Activated CD4-positive, alpha-beta memory T cell treated with anti-CD3 and anti-CD28 coated beads for 36 hours (primary cell): ENCODE measurements at regions of chr22 and their contacts with region 1.

Region 1: DNA sequence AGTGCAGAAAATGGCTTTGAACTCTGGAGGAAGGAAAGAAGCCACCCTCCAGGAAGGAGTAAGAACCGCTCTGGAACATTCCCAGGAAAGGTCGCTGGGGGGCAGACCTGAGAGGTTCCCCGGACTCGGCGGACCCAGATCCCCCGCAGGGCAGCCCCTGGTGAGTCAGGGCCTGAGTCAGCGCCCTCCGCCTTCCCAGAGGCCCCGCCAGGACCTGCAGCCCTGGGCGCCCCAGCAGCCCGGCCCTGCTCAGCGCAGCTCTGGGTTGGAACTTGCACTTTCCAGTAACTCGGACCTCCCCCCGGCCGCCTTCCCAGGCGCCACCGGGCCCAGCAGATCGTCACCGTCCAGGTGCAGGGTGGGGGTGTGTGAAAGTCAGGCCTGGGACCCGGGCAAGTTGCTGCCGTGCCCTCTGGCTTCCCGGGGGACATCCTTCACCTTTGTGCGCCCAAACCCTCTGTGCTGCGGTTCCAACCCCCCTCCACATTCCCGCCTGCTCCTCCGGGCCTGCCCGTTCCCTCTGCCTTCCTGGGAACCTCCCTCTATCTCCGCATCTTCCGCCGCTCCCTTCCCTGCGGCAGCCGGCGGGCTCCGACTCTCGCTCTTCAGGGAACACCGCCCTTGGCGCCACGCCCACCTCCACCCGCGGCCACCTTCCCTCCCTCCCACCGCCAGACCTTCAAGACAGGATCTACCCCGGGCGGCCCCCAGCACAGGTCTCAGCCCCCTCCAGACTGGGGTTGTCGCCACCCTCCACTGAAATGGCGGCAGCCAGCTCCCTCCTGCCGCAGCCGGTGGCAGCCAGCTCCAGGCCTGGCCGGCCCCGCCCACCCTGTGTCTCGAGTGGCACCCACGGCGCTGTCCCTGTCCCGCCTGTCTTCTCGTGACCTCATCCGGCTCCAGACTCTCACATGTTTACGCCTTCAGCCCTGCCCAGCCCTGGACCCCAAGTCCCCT is 36.8 kb upstream of the WNT7B start:
- DNase-seq: peak; percentile 96
- H3K4me3 Mint-ChIP-seq: peak overlapping the region; percentile 85
- H3K27ac Mint-ChIP-seq: peak overlapping the region; percentile 81
- H3K4me1 Mint-ChIP-seq: peaks cover 8% of the 10 kb centered on the region
- H3K27me3 Mint-ChIP-seq: no peaks in the 10 kb centered on the region

Region 2: DNA sequence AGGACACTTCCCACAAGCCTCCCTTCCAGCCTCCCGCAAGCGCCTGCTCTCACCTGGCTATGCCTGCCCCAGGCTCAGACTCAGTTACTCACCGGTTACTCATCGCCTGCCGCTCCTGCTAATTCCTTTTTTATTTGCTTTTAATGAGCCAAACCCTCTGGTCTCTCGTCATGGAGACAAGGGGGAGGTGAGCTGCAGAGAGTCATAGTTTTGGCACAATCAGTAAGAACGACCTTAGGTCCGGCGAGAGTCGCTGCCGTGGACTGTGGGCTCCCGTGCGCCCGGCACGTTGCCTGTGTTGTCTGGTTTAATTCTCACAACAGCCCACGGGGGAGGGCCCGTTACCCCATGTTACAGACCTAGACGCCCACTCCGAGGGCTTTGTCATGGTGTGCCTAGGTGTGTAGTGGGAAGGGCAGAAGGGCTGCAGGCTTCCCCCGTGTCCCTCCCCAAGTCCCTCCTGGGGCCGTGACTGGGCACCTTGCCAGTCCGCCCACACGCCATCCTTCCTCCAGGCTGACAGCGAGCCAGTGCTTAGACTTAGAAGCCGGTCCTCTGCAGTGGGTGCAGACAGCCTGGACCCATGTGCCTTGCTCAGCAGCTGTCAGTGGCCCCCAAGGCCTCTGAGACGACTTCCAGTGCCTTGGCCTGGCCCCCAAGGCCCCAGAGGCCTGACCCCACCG is 78.9 kb before region 1 on chr22:
- CTCF ChIA-PET with region 1: no interaction called
- POLR2A ChIA-PET with region 1: no interaction called
- intact Hi-C with region 1: no loop called
- DNase-seq: no peak
- H3K4me3 Mint-ChIP-seq: no peak overlapping the region
- H3K27ac Mint-ChIP-seq: no peak overlapping the region
- H3K4me1 Mint-ChIP-seq: no peaks in the 10 kb centered on the region
- H3K27me3 Mint-ChIP-seq: peaks cover 29% of the 10 kb centered on the region

Region 3: DNA sequence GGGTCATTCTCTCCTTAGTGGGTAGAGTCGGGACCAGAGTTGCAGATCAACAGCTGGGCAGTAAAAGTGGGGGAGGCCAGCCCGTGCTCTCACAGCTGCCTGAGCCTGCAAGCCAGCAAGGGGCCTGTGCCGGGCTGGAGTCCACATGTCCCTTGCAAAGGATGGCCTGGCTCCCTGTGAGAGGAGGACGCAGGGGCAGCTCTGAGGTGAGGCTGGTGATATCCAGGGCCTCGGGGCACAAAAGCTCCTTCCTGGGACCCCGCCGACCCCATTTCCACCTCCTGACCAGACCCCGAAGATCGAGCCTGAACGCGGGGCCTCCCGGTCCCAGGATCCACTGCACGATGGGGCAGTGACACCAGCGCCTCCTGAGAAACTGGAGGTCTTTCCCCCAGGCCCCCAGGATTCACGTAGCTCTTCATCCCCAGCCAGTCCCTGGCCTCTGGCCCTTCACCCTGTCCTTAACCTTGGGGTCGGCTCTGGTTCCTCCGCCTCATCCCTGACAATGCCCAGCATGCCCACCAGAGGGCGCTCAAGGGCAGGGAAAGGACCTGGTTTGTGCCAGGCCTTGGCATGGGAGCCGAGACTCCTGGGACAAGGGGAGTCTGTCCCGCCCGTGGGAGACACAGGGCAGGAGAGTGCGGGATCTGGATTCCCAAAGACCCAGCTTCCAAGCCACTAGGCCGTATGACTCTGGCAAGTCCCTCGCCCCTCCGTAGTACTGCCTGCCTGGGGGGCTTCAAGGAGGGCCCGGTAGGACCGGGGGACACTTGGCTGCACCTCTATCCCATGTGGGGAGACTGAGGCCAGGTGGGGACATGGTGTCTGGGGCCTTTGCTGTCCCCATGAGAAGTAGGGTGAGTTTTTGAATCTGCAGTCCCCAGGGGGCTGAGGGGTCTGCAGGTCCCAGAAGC is 19.0 kb before region 1 on chr22:
- CTCF ChIA-PET with region 1: interaction called, 22 read pairs
- POLR2A ChIA-PET with region 1: no interaction called
- intact Hi-C with region 1: no loop called
- DNase-seq: peak; percentile 85
- H3K4me3 Mint-ChIP-seq: no peak overlapping the region
- H3K27ac Mint-ChIP-seq: no peak overlapping the region
- H3K4me1 Mint-ChIP-seq: no peaks in the 10 kb centered on the region
- H3K27me3 Mint-ChIP-seq: peaks cover 2% of the 10 kb centered on the region

Region 4: DNA sequence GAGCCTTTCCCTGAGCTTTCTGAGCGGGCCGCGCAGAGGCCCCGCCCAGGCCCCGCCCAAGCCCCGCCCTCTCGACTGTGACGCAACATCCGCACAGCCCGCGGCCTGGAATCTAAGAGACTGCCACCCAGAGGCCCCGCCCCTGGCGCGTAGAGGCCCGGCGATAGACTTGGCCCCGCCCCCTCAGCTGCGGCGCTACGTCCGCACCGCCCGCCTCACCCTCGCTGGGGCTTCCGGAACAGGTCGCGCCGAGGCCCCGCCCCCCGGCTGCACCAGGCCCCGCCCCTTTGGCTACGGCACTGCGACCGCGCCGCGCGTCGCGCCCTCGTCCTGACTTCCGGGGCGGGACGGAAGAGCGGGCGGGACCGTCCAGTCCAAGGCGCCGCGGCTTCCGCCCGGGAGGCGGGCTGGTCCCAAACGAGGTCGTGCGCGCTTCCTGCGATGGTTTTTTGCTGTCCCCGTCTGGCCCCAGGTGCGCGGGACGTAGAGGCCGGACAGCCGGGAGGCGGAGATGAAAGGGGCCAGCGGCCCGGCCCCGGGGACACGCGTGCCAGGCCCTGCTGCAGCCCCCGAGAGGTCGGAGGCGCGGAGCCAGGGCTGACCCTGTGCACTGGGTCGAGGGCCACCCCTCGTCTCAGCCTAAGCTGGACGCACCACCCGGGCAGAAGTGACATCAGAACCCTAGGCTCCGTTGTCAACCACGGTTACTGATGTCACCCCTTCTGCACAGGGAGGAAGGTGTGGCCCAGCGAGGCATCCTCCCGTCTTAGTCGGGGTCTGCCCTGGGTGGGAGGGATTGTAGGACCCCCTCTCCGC is 22.2 kb after region 1 on chr22:
- CTCF ChIA-PET with region 1: interaction called, 76 read pairs
- POLR2A ChIA-PET with region 1: interaction called, 9 read pairs
- intact Hi-C with region 1: loop called (anchors 1 kb)
- DNase-seq: peak; percentile 100
- H3K4me3 Mint-ChIP-seq: peak overlapping the region; percentile 83
- H3K27ac Mint-ChIP-seq: peak overlapping the region; percentile 86
- H3K4me1 Mint-ChIP-seq: peaks cover 12% of the 10 kb centered on the region
- H3K27me3 Mint-ChIP-seq: no peaks in the 10 kb centered on the region

Region 5: DNA sequence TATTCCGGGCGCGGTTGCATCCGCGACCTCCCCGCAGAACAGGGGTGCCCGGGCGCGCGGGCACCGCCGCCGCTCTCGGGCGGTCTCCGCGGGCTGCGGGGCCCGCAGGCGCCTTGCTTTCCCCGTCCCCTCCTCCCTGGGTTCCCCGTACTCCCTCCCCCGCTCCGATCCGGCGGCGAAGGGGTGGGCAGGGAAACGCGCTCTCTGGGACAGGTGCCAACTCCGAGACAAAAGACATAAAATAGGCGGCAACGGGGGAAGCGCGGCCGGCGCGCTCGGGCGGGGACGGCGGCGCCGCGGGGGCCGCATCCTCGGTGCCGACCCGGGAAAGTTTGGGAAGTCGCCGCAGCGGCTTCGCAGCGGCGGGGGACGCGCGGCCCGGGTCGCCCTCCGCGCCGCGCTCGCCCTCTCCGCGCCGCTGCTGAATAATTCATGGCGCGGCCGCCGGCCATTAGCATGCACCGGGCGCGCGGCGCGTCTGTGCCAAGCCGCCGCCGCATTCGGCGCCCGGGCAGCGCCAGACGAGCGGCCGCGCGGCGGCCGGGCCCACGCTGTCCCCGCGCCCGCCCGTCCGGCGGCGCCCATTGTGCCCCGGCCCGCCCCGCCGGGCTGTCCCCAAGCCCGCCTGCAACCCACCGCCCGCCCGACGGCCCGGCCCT is 57.8 kb after region 1 on chr22:
- CTCF ChIA-PET with region 1: interaction called, 10 read pairs
- POLR2A ChIA-PET with region 1: interaction called, 7 read pairs
- intact Hi-C with region 1: loop called (anchors 1 kb)
- DNase-seq: peak; percentile 71
- H3K4me3 Mint-ChIP-seq: peak overlapping the region; percentile 77
- H3K27ac Mint-ChIP-seq: peak overlapping the region; percentile 83
- H3K4me1 Mint-ChIP-seq: peaks cover 37% of the 10 kb centered on the region
- H3K27me3 Mint-ChIP-seq: peaks cover 2% of the 10 kb centered on the region

Region 6: GRCh38 chr22:46116491-46116958 is 102.8 kb after region 1 on chr22:
- CTCF ChIA-PET with region 1: interaction called, 257 read pairs
- POLR2A ChIA-PET with region 1: no interaction called
- intact Hi-C with region 1: loop called (anchors 1 kb)
- DNase-seq: peak; percentile 91
- H3K4me3 Mint-ChIP-seq: no peak overlapping the region
- H3K27ac Mint-ChIP-seq: no peak overlapping the region
- H3K4me1 Mint-ChIP-seq: peaks cover 2% of the 10 kb centered on the region
- H3K27me3 Mint-ChIP-seq: no peaks in the 10 kb centered on the region

Region 7: GRCh38 chr22:46122511-46122971 is 108.8 kb after region 1 on chr22:
- CTCF ChIA-PET with region 1: interaction called, 257 read pairs
- POLR2A ChIA-PET with region 1: no interaction called
- intact Hi-C with region 1: no loop called
- DNase-seq: peak; percentile 79
- H3K4me3 Mint-ChIP-seq: no peak overlapping the region
- H3K27ac Mint-ChIP-seq: no peak overlapping the region
- H3K4me1 Mint-ChIP-seq: no peaks in the 10 kb centered on the region
- H3K27me3 Mint-ChIP-seq: no peaks in the 10 kb centered on the region

Region 8: GRCh38 chr22:46309526-46310085 is 295.9 kb after region 1 on chr22:
- CTCF ChIA-PET with region 1: interaction called, 3 read pairs
- POLR2A ChIA-PET with region 1: no interaction called
- intact Hi-C with region 1: loop called (anchors 5 kb)
- DNase-seq: no peak
- H3K4me3 Mint-ChIP-seq: no peak overlapping the region
- H3K27ac Mint-ChIP-seq: no peak overlapping the region
- H3K4me1 Mint-ChIP-seq: peaks cover 3% of the 10 kb centered on the region
- H3K27me3 Mint-ChIP-seq: no peaks in the 10 kb centered on the region